Posterior vena cava (tissue), 2 donors: ENCODE measurements at regions of chr15 and their contacts with region 1.

Region 1: GRCh38 chr15:88061452-88061851 is 195.1 kb downstream of the NTRK3 start:
- DNase-seq: peak; percentile 82

Region 2: GRCh38 chr15:87959081-87959480 is 102.4 kb before region 1 on chr15:
- intact Hi-C with region 1: loop called in 1 of 2 experiments (anchors 10 kb)
- DNase-seq: no peak